CD8-positive, alpha-beta memory T cell (primary cell): ENCODE measurements at regions of chr12 and their contacts with region 1.

Region 1: DNA sequence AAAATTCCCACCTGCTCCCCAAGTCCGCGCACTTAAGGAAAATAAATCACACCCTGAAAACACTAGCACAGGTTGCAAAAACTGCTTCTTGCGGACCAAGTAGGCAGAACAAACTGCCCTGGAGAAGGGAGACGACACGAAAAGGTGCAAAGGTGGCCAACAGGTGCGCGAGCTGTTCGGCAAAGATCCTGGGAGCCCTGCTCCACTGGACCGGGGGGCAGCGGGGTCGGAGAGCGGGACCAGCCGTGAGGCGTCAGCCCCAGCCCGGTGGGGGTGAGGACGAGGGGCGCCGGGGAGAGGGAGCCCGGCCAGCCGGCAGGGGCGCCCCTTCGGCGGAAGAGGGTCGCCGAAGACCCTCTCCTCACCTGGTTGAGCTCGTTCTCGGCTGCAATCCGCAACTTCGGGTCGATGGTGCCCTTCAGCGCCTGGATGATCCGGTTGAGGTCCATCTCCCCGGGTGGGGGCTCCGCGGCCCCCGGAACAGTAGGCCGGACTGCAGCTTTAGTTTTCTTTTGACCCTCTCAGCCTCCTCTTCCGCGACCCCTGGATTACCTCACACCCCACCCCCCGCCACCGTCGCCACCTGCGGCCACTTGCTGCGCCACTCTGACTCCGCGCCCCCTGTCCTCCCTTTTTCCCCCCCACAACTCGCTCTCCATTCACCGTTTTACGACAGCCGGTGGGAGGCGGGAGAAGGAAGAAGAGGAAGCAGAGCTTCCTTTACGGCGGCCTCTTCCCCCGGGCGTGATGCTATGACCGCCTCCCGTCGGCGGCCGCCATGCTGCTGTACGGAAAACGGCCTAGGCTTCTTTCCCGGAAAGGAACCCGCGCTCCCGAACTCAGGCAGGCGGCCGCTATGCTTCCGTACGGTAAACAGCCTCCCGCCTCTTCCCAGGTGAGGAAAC is at the start of gene IPO8:
- DNase-seq: peak; percentile 78 to 90 (median 83)
- H3K4me3 ChIP-seq: peak within 1 kb of the TSS; percentile 89
- H3K4me3 Mint-ChIP-seq: peak within 1 kb of the TSS; percentile 96 to 99 (median 99)
- H3K27ac ChIP-seq: peak within 1 kb of the TSS; percentile 86
- H3K27ac Mint-ChIP-seq: peak within 1 kb of the TSS; percentile 84 to 97 (median 96)
- H3K4me1 ChIP-seq: peaks cover 21% of the 10 kb centered on the region
- H3K4me1 Mint-ChIP-seq: peaks cover 47 to 55% (median 52%) of the 10 kb centered on the region in 3 donors
- H3K27me3 ChIP-seq: no peaks in the 10 kb centered on the region
- H3K27me3 Mint-ChIP-seq: no peaks in the 10 kb centered on the region
- total RNA-seq, gene IPO8: 50.8 to 52.9 TPM

Region 2: GRCh38 chr12:30323008-30323407 is 372.4 kb before region 1 on chr12:
- CTCF ChIA-PET with region 1: no interaction called
- POLR2A ChIA-PET with region 1: no interaction called
- DNase-seq: no peak
- H3K4me3 ChIP-seq: no peak overlapping the region
- H3K4me3 Mint-ChIP-seq: no peak overlapping the region
- H3K27ac ChIP-seq: no peak overlapping the region
- H3K27ac Mint-ChIP-seq: no peak overlapping the region
- H3K4me1 ChIP-seq: no peaks in the 10 kb centered on the region
- H3K4me1 Mint-ChIP-seq: no peaks in the 10 kb centered on the region
- H3K27me3 ChIP-seq: no peaks in the 10 kb centered on the region
- H3K27me3 Mint-ChIP-seq: peaks cover 0 to 2% of the 10 kb centered on the region in 2 donors

Region 3: DNA sequence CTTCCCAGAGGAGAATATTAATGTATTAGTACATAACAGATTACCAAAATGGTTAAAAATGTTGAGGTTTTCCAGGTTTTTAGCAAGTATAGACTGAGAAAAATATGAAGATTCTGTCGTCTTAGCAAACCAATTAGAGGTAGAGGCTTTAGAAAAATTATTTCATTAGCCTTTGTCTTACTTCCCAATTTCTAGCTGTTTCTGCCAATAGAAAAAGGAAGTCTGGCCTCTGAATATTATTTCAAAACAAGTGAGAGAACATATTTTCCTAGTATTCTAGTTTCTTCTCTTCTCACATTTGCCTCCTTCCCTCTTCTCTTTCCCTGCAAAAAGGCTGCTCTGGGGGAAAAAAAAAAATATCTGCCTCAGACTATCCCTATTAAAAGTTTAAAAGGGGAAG is 16.2 kb before region 1 on chr12:
- CTCF ChIA-PET with region 1: interaction called, 4 read pairs
- POLR2A ChIA-PET with region 1: interaction called, 10 read pairs
- DNase-seq: no peak
- H3K4me3 ChIP-seq: no peak overlapping the region
- H3K4me3 Mint-ChIP-seq: no peak overlapping the region
- H3K27ac ChIP-seq: no peak overlapping the region
- H3K27ac Mint-ChIP-seq: no peak overlapping the region
- H3K4me1 ChIP-seq: no peaks in the 10 kb centered on the region
- H3K4me1 Mint-ChIP-seq: no peaks in the 10 kb centered on the region
- H3K27me3 ChIP-seq: no peaks in the 10 kb centered on the region
- H3K27me3 Mint-ChIP-seq: no peaks in the 10 kb centered on the region

Region 4: DNA sequence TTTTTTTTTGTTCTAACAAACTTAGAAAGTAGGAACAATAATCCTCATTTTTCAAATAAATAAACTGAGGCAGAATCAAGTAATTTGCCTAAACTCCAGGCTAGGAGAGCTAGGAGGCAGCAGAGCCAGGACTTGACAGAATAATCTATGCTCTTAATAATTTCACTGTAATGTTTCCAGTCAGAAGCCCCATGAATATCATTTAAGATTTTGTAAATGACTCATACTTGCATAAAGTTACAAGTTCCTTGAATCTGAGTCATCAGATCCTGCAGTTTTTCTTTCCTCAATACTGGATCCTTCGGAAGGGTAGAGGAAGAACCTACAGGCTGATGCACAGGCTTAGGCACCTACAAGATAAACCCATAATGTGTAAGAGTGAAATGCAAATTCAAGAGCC is 30.3 kb after region 1 on chr12:
- CTCF ChIA-PET with region 1: no interaction called
- POLR2A ChIA-PET with region 1: interaction called, 10 read pairs
- DNase-seq: no peak
- H3K4me3 ChIP-seq: no peak overlapping the region
- H3K4me3 Mint-ChIP-seq: no peak overlapping the region
- H3K27ac ChIP-seq: no peak overlapping the region
- H3K27ac Mint-ChIP-seq: peak overlapping the region in 1 of 8 donors; percentile 71
- H3K4me1 ChIP-seq: no peaks in the 10 kb centered on the region
- H3K4me1 Mint-ChIP-seq: peaks cover 6 to 12% (median 7%) of the 10 kb centered on the region in 3 donors
- H3K27me3 ChIP-seq: no peaks in the 10 kb centered on the region
- H3K27me3 Mint-ChIP-seq: no peaks in the 10 kb centered on the region

Region 5: DNA sequence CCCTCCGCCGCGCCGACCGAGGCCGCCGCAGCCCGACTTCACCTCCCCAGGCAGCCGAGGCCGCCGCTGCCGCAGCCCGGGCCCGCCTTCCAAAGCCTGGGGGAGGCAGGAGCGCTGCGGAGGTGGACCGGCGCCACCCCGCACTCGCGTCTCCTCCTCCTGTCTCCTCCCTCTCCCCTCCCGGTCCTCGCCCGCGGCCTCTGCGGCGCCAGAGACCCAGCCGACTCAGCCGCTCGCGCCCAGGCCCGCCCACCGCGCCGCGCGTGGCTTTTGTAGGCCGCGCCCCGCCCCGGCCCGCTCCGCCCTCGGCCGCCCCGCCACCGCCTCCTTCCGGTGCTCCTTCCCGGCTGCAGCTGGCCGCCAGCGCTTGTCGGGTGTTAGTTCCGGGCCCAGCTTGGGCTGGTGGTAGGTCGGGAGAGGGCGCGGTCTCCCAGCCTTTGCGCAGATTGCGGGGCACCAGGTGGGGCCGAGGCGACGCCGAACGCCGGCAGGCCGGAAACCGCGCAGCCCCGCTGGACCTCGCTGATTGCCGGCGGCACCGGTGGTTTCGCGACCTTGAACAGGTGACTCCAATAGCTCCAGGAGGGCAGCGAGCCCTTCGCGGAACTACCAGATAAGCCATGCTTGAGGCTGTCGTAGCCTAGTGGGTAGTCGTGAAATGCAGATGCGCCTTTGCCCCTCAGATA is 59.4 kb after region 1 on chr12 and contains the start of gene CAPRIN2:
- CTCF ChIA-PET with region 1: interaction called, 8 read pairs
- POLR2A ChIA-PET with region 1: interaction called, 13 read pairs
- DNase-seq: peak; percentile 90 to 96 (median 94)
- H3K4me3 ChIP-seq: peak within 1 kb of the TSS; percentile 82
- H3K4me3 Mint-ChIP-seq: peak within 1 kb of the TSS; percentile 92 to 99 (median 93)
- H3K27ac ChIP-seq: peak within 1 kb of the TSS; percentile 47
- H3K27ac Mint-ChIP-seq: peak within 1 kb of the TSS; percentile 82 to 97 (median 92)
- H3K4me1 ChIP-seq: peaks cover 17% of the 10 kb centered on the region
- H3K4me1 Mint-ChIP-seq: peaks cover 32 to 48% (median 47%) of the 10 kb centered on the region in 3 donors
- H3K27me3 ChIP-seq: no peaks in the 10 kb centered on the region
- H3K27me3 Mint-ChIP-seq: peaks cover 0 to 1% of the 10 kb centered on the region in 2 donors
- total RNA-seq, gene CAPRIN2: 8.8 to 11.5 TPM